WTC11 (cell line): ENCODE measurements at regions of chr4 and their contacts with region 1.

Region 1: DNA sequence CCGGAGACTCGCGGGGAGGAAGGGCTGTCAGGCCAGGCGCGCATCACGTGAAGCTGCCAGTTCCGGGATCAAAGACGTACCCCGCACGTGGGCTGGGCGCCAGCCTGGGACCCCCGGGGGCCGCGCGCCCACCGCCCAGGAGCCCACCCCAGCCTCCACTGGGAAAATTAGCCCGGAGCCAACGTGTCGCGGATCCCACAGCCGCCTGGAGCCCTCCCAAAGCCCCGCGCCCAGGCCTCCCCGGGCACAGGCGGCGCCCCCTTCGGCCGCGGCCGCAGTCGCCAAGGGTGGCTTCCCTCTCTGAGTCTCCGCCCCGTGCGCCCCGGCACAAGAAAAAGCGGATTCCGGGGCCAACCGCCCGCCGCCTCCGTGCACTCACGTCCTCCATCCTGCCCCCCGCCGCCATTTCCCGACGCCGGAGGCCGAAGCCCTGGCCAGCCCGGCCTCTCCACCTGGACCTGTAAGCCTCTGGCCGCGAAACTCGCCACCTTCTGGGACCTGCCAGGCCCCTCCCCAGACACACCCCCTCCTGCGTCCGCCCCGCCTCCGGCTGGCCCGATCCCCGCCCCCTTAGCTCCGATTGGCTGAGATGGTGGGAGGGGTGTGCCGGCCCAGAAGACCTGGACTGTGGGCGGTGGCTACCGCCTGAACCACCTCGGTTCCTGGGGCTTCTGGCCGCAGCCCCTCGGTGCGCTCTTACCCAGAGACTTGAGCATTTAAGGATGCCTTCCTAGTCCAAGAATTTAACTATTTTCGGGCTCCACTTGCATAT is at the start of gene TMEM192:
- DNase-seq: peak; percentile 93
- ATAC-seq: peak; percentile 98
- H3K4me3 Mint-ChIP-seq: peak within 1 kb of the TSS; percentile 80
- H3K27ac Mint-ChIP-seq: peak within 1 kb of the TSS; percentile 82
- H3K4me1 Mint-ChIP-seq: peaks cover 15% of the 10 kb centered on the region
- H3K27me3 Mint-ChIP-seq: peaks cover 3% of the 10 kb centered on the region; the same call in 1 of the 2 replicates
- CTCF ChIP-seq: no peak
- total RNA-seq, gene TMEM192: 10.5 to 11.2 TPM (median 11.0 TPM) in 3 replicates

Region 2: GRCh38 chr4:164997941-164998340 is 114.6 kb before region 1 on chr4:
- CTCF ChIA-PET with region 1: no interaction called
- POLR2A ChIA-PET with region 1: no interaction called
- DNase-seq: no peak
- ATAC-seq: no peak
- H3K4me3 Mint-ChIP-seq: no peak overlapping the region
- H3K27ac Mint-ChIP-seq: no peak overlapping the region
- H3K4me1 Mint-ChIP-seq: peaks cover 8% of the 10 kb centered on the region
- H3K27me3 Mint-ChIP-seq: no peaks in the 10 kb centered on the region
- CTCF ChIP-seq: no peak

Region 3: GRCh38 chr4:165016971-165017370 is 95.6 kb before region 1 on chr4:
- CTCF ChIA-PET with region 1: interaction called, 10 read pairs
- POLR2A ChIA-PET with region 1: no interaction called
- DNase-seq: peak; percentile 67
- ATAC-seq: peak; percentile 100
- H3K4me3 Mint-ChIP-seq: no peak overlapping the region
- H3K27ac Mint-ChIP-seq: no peak overlapping the region
- H3K4me1 Mint-ChIP-seq: no peaks in the 10 kb centered on the region
- H3K27me3 Mint-ChIP-seq: no peaks in the 10 kb centered on the region; the same call in 1 of the 2 replicates
- CTCF ChIP-seq: peak; percentile 26; the same call in 1 of the 2 replicates

Region 4: GRCh38 chr4:165048170-165048569 is 64.4 kb before region 1 on chr4:
- CTCF ChIA-PET with region 1: no interaction called
- POLR2A ChIA-PET with region 1: no interaction called
- DNase-seq: no peak
- ATAC-seq: peak; percentile 62
- H3K4me3 Mint-ChIP-seq: no peak overlapping the region
- H3K27ac Mint-ChIP-seq: peak overlapping the region; percentile 7; the same call in 1 of the 2 replicates
- H3K4me1 Mint-ChIP-seq: peaks cover 9% of the 10 kb centered on the region
- H3K27me3 Mint-ChIP-seq: no peaks in the 10 kb centered on the region
- CTCF ChIP-seq: no peak

Region 5: DNA sequence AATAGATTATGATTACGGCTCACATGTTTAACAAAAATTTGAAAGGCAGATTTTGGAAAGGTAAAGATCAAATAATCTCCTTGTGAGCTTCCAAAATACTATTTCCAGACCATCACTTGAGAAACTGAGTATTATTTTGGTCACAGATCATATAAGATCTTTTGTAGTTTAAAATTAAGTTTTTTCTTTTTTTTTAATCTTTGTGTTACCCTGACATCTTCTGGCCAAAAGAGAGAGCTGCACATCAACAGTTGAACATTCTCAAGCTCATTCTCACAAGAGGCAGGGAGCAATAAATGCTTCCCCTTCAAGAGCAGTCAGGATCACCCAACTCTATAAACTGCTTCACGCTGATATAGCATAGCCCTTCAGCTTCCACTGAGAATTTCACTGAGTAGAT is 15.8 kb before region 1 on chr4:
- CTCF ChIA-PET with region 1: interaction called, 20 read pairs
- POLR2A ChIA-PET with region 1: interaction called, 4 read pairs
- DNase-seq: no peak
- ATAC-seq: peak; percentile 83
- H3K4me3 Mint-ChIP-seq: no peak overlapping the region
- H3K27ac Mint-ChIP-seq: no peak overlapping the region
- H3K4me1 Mint-ChIP-seq: no peaks in the 10 kb centered on the region
- H3K27me3 Mint-ChIP-seq: no peaks in the 10 kb centered on the region
- CTCF ChIP-seq: peak; percentile 44

Region 6: GRCh38 chr4:165124463-165124862 is 11.9 kb after region 1 on chr4:
- CTCF ChIA-PET with region 1: interaction called, 15 read pairs
- POLR2A ChIA-PET with region 1: interaction called, 3 read pairs
- DNase-seq: no peak
- ATAC-seq: no peak
- H3K4me3 Mint-ChIP-seq: no peak overlapping the region
- H3K27ac Mint-ChIP-seq: no peak overlapping the region
- H3K4me1 Mint-ChIP-seq: no peaks in the 10 kb centered on the region
- H3K27me3 Mint-ChIP-seq: peaks cover 6% of the 10 kb centered on the region
- CTCF ChIP-seq: no peak

Region 7: DNA sequence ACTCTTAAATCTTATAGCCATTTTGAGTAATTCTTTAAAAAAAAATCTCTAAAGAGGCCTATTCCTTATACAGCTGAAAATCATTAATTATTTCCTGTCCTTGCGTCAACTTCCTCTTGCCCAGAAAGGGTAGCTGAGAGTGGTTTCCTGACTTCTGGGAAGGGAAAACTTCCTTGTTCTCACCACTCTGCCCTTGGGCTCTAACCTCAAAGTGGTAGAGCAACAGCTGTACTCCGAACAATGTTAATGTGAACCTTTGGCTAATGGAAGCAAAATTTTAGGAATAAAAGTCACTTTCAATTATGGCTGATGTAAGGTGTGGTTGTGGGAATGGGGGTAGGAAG is 110.1 kb after region 1 on chr4:
- CTCF ChIA-PET with region 1: no interaction called
- POLR2A ChIA-PET with region 1: no interaction called
- DNase-seq: no peak
- ATAC-seq: no peak
- H3K4me3 Mint-ChIP-seq: no peak overlapping the region
- H3K27ac Mint-ChIP-seq: peak overlapping the region; percentile 67; the same call in 1 of the 2 replicates
- H3K4me1 Mint-ChIP-seq: peaks cover 13% of the 10 kb centered on the region
- H3K27me3 Mint-ChIP-seq: no peaks in the 10 kb centered on the region
- CTCF ChIP-seq: no peak

Region 8: GRCh38 chr4:165327211-165328100 is 214.9 kb after region 1 on chr4 and contains the start of gene MSMO1:
- CTCF ChIA-PET with region 1: interaction called, 14 read pairs
- POLR2A ChIA-PET with region 1: interaction called, 6 read pairs
- DNase-seq: peak; percentile 99
- ATAC-seq: peak; percentile 97
- H3K4me3 Mint-ChIP-seq: no peak within 1 kb of the TSS
- H3K27ac Mint-ChIP-seq: peak within 1 kb of the TSS; percentile 95
- H3K4me1 Mint-ChIP-seq: peaks cover 40% of the 10 kb centered on the region
- H3K27me3 Mint-ChIP-seq: no peaks in the 10 kb centered on the region
- CTCF ChIP-seq: no peak
- total RNA-seq, gene MSMO1: 72.9 to 89.9 TPM (median 86.8 TPM) in 3 replicates

Region 9: DNA sequence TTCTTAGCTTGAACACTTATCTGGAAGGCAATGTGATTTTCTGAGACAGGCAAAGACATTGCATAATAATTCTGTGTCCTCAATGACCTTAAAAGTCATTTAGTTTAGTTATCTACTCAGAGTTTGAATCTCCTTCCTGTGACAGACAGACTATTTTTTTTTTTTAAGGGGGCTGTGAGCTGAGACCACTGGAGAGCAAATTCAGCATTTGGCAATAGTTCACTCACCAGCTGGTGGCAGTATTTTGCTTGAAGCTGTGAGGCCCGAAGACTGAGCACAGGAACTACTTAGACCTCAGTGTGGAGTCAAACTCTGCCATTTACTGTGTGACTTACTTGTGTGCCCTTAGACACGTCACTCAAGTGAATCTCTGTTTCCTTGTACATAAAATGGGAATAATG is 243.3 kb after region 1 on chr4:
- CTCF ChIA-PET with region 1: interaction called, 11 read pairs
- POLR2A ChIA-PET with region 1: interaction called, 3 read pairs
- DNase-seq: peak; percentile 63
- ATAC-seq: peak; percentile 87
- H3K4me3 Mint-ChIP-seq: no peak overlapping the region
- H3K27ac Mint-ChIP-seq: no peak overlapping the region
- H3K4me1 Mint-ChIP-seq: 0 out of 2 replicates have a peak, but pooled peaks cover 2% of the 10 kb centered on the region
- H3K27me3 Mint-ChIP-seq: no peaks in the 10 kb centered on the region
- CTCF ChIP-seq: no peak